ENCODE measurements at regions of chr7 and their contacts with region 1.

Region 1: GRCh38 chr7:78510580-78511188 is 712.1 kb downstream of the PHTF2 start:
- DNase-seq: peak; percentile 55
- ATAC-seq: peak; percentile 86
- H3K4me3 Mint-ChIP-seq: no peak overlapping the region
- H3K27ac Mint-ChIP-seq: no peak overlapping the region; the same call in 1 of the 2 replicates
- H3K4me1 Mint-ChIP-seq: peaks cover 29% of the 10 kb centered on the region
- H3K27me3 Mint-ChIP-seq: no peaks in the 10 kb centered on the region
- CTCF ChIP-seq: peak; percentile 69

Region 2: DNA sequence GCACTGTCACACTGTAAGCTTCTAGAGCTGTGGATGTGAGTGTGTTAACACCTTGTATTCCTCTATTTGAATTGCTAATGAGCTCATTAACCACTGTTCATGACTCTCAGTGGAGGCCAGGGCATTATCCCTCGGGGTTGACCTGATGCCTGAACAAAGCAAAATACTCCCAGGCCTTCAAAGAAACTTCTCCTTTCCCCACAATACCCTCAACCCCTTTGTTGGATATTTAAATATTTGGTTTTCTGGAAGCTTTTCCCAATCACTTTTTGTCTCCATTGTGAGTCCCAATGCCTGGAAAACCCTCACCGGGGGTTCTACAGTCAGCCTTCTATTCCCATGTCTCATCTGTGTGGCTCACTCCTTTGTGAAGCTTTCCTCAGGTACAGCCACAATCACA is 68.0 kb after region 1 on chr7:
- CTCF ChIA-PET with region 1: interaction called, 10 read pairs
- POLR2A ChIA-PET with region 1: no interaction called
- DNase-seq: peak; percentile 36
- ATAC-seq: peak; percentile 89
- H3K4me3 Mint-ChIP-seq: no peak overlapping the region
- H3K27ac Mint-ChIP-seq: peak overlapping the region; percentile 98
- H3K4me1 Mint-ChIP-seq: peaks cover 78% of the 10 kb centered on the region
- H3K27me3 Mint-ChIP-seq: no peaks in the 10 kb centered on the region
- CTCF ChIP-seq: no peak